HCT116 (cell line): ENCODE measurements at regions of chr9 and their contacts with region 1.

Region 1: GRCh38 chr9:105535920-105536668 is 21.8 kb upstream of the FKTN start:
- DNase-seq: no peak
- ATAC-seq: no peak
- H3K4me3 ChIP-seq: no peak overlapping the region
- H3K27ac ChIP-seq: no peak overlapping the region
- H3K4me1 ChIP-seq: peaks cover 0 to 5% of the 10 kb centered on the region in 2 experiments; a peak in 1 of 4 replicates
- H3K27me3 ChIP-seq: no peaks in the 10 kb centered on the region
- CTCF ChIP-seq: no peak
- POLR2A ChIP-seq: no peak
- RAD21 ChIP-seq: no peak

Region 2: DNA sequence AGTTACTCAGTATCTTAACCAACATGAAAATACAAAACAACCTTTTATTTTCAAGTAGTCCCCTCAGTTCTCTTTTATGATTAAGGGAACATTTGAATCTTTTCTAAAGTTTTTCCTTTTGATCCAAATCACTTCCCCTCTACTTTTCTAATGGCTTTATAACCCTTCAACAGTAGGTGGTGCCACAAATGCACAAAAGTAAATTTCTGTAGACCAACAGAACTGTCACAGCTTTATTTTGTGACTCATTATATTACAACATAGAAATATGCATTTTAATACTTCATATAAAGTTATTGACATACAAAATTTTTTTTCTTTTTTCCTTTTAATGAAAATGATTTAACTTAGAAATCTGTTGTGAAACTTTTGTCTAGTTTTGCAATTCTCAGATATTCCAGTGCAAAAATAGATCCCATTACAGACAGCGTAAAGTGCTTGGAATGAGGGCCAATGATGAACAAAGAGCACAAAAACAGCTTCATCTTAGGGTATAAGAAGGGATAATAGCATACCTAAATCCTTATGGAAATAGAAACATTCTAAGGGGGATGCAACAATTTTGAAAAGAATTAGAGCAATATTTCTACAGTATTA is 755.2 kb before region 1 on chr9:
- CTCF ChIA-PET with region 1: no interaction called
- POLR2A ChIA-PET with region 1: no interaction called
- RAD21 ChIA-PET with region 1: no interaction called
- intact Hi-C with region 1: loop called (anchors 10 kb)
- DNase-seq: peak; percentile 16
- ATAC-seq: peak; percentile 57
- H3K4me3 ChIP-seq: no peak overlapping the region
- H3K27ac ChIP-seq: no peak overlapping the region
- H3K4me1 ChIP-seq: no peaks in the 10 kb centered on the region
- H3K27me3 ChIP-seq: 0 out of 2 replicates have a peak, but pooled peaks cover 4% of the 10 kb centered on the region
- CTCF ChIP-seq: peak; percentile 47 to 59 (median 50); a peak in 5 of 6 replicates
- POLR2A ChIP-seq: no peak
- RAD21 ChIP-seq: peak; percentile 71

Region 3: DNA sequence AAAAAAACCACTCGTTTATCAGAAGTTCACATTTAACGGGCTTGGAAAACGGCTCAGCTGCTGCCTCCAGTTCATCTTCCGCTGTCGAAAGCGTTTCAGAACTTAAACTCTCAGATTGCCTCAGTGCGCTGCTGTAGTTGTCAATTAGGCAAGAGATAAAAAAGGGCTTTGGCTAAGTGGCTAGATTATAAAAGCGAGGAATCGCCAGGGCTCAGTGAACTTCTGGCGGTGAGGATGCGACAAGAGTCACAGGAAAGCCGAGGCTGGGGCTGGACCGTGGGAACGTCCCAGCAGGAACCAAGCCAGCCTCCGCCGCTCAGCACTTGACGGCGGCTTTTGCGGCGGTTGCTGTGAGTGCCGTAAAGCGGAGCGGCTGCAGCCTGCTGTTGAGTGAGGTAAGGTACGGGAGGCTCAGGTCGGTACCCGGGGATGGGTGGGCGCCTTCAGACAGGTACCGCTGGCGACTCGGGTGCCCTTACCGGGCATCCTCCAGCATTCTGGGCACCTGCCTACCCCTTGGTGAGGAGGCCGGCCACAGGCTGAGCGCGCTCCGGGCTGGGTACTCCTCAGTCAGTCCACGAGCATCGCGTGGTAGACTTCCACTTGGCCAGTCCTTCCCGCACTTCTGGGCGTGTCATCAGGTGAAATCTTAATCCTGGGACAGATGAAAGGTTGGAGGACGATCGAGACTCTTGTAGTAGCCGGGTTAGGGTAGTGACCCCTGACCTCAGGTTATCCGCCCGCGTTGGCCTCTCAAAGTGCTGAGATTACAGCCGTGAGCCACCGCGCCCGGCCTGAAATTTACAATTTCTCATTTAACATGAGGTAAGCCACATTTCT is 21.9 kb after region 1 on chr9 and contains the start of gene FKTN:
- CTCF ChIA-PET with region 1: no interaction called
- POLR2A ChIA-PET with region 1: no interaction called
- RAD21 ChIA-PET with region 1: no interaction called
- intact Hi-C with region 1: no loop called
- DNase-seq: peak; percentile 64
- ATAC-seq: peak; percentile 96
- H3K4me3 ChIP-seq: peak within 1 kb of the TSS; percentile 80 to 86
- H3K27ac ChIP-seq: peak within 1 kb of the TSS; percentile 28; the same call in 1 of the 2 replicates
- H3K4me1 ChIP-seq: peaks cover 3 to 12% of the 10 kb centered on the region in 2 experiments; a peak in 3 of 4 replicates
- H3K27me3 ChIP-seq: no peaks in the 10 kb centered on the region
- CTCF ChIP-seq: no peak
- POLR2A ChIP-seq: peak; percentile 34
- RAD21 ChIP-seq: no peak
- total RNA-seq, gene FKTN: 17.3 TPM